Activated CD4-positive, alpha-beta memory T cell treated with anti-CD3 and anti-CD28 coated beads for 36 hours (primary cell): ENCODE measurements at regions of chr4 and their contacts with region 1.

Region 1: GRCh38 chr4:51842554-51843308 is at the start of gene DCUN1D4:
- DNase-seq: peak; percentile 99
- H3K4me3 Mint-ChIP-seq: peak within 1 kb of the TSS; percentile 89
- H3K27ac Mint-ChIP-seq: peak within 1 kb of the TSS; percentile 89
- H3K4me1 Mint-ChIP-seq: peaks cover 18% of the 10 kb centered on the region
- H3K27me3 Mint-ChIP-seq: no peaks in the 10 kb centered on the region
- total RNA-seq, gene DCUN1D4: 23.5 to 25.1 TPM

Region 2: GRCh38 chr4:51895813-51896408 is 53.2 kb after region 1 on chr4:
- CTCF ChIA-PET with region 1: interaction called, 3 read pairs
- POLR2A ChIA-PET with region 1: no interaction called
- intact Hi-C with region 1: loop called (anchors 2 kb)
- DNase-seq: peak; percentile 62
- H3K4me3 Mint-ChIP-seq: no peak overlapping the region
- H3K27ac Mint-ChIP-seq: no peak overlapping the region
- H3K4me1 Mint-ChIP-seq: peaks cover 12% of the 10 kb centered on the region
- H3K27me3 Mint-ChIP-seq: no peaks in the 10 kb centered on the region

Region 3: DNA sequence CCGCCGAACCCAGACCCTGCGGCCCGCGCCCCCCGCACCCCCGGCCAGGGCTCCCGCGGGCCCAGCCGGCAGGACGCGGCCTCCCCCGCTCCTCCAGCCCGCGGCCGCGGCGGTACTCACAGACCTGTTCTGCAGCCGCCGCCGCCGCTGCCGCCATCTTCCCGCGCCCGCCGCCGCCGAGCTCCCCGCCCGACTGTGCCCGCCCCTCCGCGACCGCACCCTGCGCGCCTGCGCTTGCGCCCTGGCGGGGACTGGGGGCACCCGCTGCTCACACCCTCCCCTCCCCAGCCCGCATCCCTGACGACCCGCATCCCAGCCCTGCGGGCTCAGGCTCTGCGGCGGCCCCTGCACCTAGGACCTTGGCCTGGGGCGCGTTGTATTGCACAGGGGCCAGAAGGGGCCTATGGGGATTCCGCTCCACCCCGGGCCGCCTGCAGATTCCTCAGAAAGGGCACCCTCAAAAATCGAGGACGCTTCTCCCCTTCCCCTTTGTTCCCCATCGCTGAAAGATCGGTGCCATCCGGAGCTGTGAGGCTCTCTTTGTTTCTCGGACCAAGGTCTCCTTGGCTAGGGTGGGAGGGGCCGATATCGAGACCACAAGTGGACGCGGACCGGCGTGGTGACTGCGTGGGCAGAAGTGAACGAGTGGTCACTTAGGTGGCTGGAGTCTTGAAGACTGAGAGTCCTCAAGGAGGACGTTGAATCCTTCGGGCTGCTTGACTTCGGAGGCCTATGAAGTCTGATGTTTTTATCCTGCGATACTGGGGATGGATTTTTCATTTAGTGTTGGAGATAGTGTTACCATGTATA is 195.6 kb after region 1 on chr4 and contains the start of gene SGCB:
- CTCF ChIA-PET with region 1: interaction called, 5 read pairs
- POLR2A ChIA-PET with region 1: interaction called, 5 read pairs
- intact Hi-C with region 1: loop called (anchors 1 kb)
- DNase-seq: peak; percentile 78
- H3K4me3 Mint-ChIP-seq: peak within 1 kb of the TSS; percentile 81
- H3K27ac Mint-ChIP-seq: no peak within 1 kb of the TSS
- H3K4me1 Mint-ChIP-seq: peaks cover 25% of the 10 kb centered on the region
- H3K27me3 Mint-ChIP-seq: peaks cover 11% of the 10 kb centered on the region
- total RNA-seq, gene SGCB: 13.9 to 14.3 TPM

Region 4: DNA sequence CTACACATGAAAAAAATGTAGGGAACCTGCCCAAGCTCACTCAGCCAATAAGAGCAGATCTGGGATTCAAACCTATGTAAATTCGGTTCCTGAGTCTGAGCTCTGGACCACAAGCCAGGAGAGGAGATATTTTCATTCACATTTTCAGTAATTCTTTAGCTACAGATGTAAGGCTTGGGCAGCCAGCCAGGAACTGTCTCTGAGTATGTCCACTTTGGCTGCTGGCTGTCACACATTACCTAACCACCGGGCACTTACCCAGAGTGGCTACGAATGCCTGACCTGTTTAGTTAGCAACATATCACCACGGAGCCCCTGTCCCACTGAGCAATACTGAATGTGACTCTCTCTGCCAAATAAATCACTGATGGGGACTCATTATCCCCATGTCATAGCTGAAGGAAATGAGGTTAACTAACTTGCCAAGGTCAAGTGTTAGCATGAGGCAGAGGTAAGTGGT is 801.1 kb after region 1 on chr4:
- CTCF ChIA-PET with region 1: no interaction called
- POLR2A ChIA-PET with region 1: no interaction called
- intact Hi-C with region 1: loop called (anchors 5 kb)
- DNase-seq: no peak
- H3K4me3 Mint-ChIP-seq: no peak overlapping the region
- H3K27ac Mint-ChIP-seq: no peak overlapping the region
- H3K4me1 Mint-ChIP-seq: peaks cover 57% of the 10 kb centered on the region
- H3K27me3 Mint-ChIP-seq: no peaks in the 10 kb centered on the region

Region 5: GRCh38 chr4:52659001-52659721 is 816.4 kb after region 1 on chr4 and contains the start of gene USP46:
- CTCF ChIA-PET with region 1: no interaction called
- POLR2A ChIA-PET with region 1: no interaction called
- intact Hi-C with region 1: loop called (anchors 1 kb)
- DNase-seq: peak; percentile 68
- H3K4me3 Mint-ChIP-seq: peak within 1 kb of the TSS; percentile 84
- H3K27ac Mint-ChIP-seq: peak within 1 kb of the TSS; percentile 79
- H3K4me1 Mint-ChIP-seq: peaks cover 40% of the 10 kb centered on the region
- H3K27me3 Mint-ChIP-seq: peaks cover 2% of the 10 kb centered on the region
- total RNA-seq, gene USP46: 6.2 to 7.0 TPM

Region 6: DNA sequence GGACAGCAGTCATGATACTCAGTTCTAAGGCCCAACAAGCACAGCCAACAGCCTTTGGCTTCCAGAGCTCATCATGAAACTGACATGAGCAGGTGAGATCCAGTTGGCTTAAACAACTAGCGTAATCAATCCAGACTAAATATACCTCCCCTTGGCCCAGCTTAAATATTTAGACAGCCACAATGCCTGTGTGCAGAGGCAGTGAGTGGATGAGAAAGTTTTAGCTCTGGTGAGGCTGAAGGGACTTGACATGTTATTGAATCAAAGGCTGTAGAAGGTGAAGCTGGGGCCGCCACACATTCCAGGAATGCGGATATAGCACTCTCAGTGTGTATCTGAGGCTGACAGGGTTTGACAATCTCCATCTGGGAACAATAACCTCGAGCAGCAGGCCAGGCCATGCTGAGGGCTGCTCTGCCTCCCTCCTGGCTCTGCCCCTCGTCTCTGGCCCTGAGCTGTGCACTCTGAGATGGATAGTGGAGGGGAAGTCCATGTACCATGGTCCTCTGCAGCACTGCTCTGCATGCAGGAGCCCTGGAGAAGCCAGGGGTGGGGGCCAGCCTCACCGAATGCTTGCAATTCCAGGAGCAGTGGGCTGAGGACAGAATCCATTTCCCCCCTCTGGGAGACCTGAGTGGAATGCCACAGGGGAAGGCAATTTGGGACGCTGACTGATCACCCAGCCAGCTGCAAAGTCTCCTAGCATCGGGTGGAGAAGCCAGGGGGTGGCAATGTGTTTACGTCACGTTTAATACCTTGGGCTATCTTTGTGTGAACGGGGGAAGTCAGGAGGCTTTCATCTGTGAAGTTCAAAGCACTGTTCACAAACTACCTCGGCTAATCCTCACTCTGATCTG is 982.1 kb after region 1 on chr4:
- CTCF ChIA-PET with region 1: no interaction called
- POLR2A ChIA-PET with region 1: no interaction called
- intact Hi-C with region 1: loop called (anchors 5 kb)
- DNase-seq: no peak
- H3K4me3 Mint-ChIP-seq: no peak overlapping the region
- H3K27ac Mint-ChIP-seq: peak overlapping the region; percentile 14
- H3K4me1 Mint-ChIP-seq: peaks cover 39% of the 10 kb centered on the region
- H3K27me3 Mint-ChIP-seq: no peaks in the 10 kb centered on the region

Region 7: DNA sequence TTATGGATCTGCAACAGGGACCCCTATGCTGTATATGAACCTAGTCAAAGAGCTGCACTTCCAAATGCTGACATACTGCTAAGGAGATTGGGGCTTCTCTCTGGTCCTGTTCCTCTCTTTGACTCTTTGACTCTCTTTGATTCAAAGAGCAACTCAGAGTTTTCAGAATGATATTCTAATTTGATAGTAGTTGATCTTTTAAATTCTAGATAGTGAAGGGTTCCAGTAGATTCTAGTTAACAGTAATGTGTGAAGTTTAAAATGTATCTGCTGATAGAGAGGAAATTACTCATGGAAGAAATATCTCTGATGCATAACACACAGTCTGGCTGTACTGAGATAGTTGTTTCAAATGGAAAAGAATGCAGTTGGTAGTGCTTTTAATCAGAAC is 1258.5 kb after region 1 on chr4:
- CTCF ChIA-PET with region 1: no interaction called
- POLR2A ChIA-PET with region 1: no interaction called
- intact Hi-C with region 1: no loop called
- DNase-seq: no peak
- H3K4me3 Mint-ChIP-seq: no peak overlapping the region
- H3K27ac Mint-ChIP-seq: peak overlapping the region; percentile 9
- H3K4me1 Mint-ChIP-seq: peaks cover 12% of the 10 kb centered on the region
- H3K27me3 Mint-ChIP-seq: no peaks in the 10 kb centered on the region

Region 8: DNA sequence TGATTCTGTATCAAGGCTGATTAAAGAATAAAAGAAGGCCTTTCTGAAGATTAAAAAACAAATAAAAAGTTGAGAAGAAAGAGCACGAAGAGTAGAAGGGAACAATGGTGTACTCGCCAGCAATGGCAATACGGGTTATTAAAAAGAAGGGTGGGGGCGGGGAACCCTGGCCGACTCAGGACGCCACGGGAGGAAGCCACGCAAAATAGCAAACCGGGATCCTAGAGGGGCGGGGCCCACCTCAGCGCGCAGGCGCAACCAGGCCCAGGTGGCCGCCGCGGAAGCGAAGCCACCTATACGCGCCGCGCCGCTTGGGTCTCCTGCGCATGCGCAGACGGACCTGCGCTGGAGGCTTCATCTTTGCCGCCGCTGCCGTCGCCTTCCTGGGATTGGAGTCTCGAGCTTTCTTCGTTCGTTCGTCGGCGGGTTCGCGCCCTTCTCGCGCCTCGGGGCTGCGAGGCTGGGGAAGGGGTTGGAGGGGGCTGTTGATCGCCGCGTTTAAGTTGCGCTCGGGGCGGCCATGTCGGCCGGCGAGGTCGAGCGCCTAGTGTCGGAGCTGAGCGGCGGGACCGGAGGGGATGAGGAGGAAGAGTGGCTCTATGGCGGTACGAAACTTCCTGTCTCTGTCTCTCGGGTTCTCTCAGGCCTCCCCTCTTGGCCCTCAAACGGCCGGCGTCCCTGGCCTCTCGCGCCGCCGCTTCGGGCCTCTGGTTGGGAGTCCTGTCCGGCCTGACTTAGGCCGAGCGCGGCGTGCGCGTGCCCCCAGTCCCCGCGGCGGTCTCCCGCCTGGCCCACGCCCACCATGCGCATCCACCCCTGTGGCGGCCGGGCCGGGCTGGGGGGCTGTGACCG is 1534.8 kb after region 1 on chr4 and contains the start of gene FIP1L1:
- CTCF ChIA-PET with region 1: no interaction called
- POLR2A ChIA-PET with region 1: no interaction called
- intact Hi-C with region 1: loop called (anchors 10 kb)
- DNase-seq: peak; percentile 97
- H3K4me3 Mint-ChIP-seq: peak within 1 kb of the TSS; percentile 99
- H3K27ac Mint-ChIP-seq: peak within 1 kb of the TSS; percentile 98
- H3K4me1 Mint-ChIP-seq: peaks cover 32% of the 10 kb centered on the region
- H3K27me3 Mint-ChIP-seq: peaks cover 7% of the 10 kb centered on the region
- total RNA-seq, gene FIP1L1: 65.0 to 72.7 TPM